PC-3 (cell line): ENCODE measurements at regions of chr4 and their contacts with region 1.

Region 1: GRCh38 chr4:87559109-87559837 is 30.1 kb upstream of the SPARCL1 start:
- DNase-seq: peak; percentile 20
- ATAC-seq: no peak
- H3K4me3 ChIP-seq: no peak overlapping the region
- H3K27ac ChIP-seq: no peak overlapping the region
- H3K4me1 ChIP-seq: peaks cover 30% of the 10 kb centered on the region
- H3K27me3 ChIP-seq: no peaks in the 10 kb centered on the region
- CTCF ChIP-seq: no peak

Region 2: GRCh38 chr4:87574996-87575395 is 15.7 kb after region 1 on chr4:
- CTCF ChIA-PET with region 1: no interaction called
- POLR2A ChIA-PET with region 1: no interaction called
- intact Hi-C with region 1: loop called (anchors 1 kb)
- DNase-seq: peak; percentile 46
- ATAC-seq: no peak
- H3K4me3 ChIP-seq: no peak overlapping the region
- H3K27ac ChIP-seq: no peak overlapping the region
- H3K4me1 ChIP-seq: peaks cover 14% of the 10 kb centered on the region
- H3K27me3 ChIP-seq: no peaks in the 10 kb centered on the region
- CTCF ChIP-seq: no peak

Region 3: DNA sequence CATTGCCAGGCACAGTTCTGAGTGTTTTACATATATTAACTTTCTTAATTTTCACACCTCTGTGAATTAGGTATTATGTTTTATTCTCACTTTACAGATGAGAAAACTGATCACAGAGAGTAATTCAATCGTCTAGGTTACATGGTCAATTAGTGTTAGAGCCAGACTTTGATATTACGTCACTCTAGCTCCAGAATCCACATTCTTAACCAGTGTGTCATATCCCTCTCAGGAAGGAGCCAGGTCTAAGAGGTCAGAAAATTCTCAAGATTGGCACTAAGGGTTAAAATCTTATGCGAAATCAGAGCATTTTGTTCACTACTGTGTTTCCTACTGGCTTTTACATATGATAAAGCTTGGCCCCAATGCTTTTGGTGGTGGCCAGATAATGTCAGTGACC is 98.3 kb after region 1 on chr4:
- CTCF ChIA-PET with region 1: no interaction called
- POLR2A ChIA-PET with region 1: no interaction called
- intact Hi-C with region 1: loop called (anchors 5 kb)
- DNase-seq: peak; percentile 71
- ATAC-seq: 0 out of 2 replicates have a peak, but pooled peaks have one; percentile 6
- H3K4me3 ChIP-seq: no peak overlapping the region
- H3K27ac ChIP-seq: peak overlapping the region; percentile 85
- H3K4me1 ChIP-seq: peaks cover 33% of the 10 kb centered on the region
- H3K27me3 ChIP-seq: no peaks in the 10 kb centered on the region
- CTCF ChIP-seq: no peak